Mammary epithelial cell (primary cell): ENCODE measurements at regions of chr17 and their contacts with region 1.

Region 1: GRCh38 chr17:8337802-8338752 is 1.6 kb upstream of the ODF4 start:
- DNase-seq: no peak
- H3K4me3 ChIP-seq: no peak overlapping the region
- H3K27ac ChIP-seq: no peak overlapping the region
- H3K4me1 ChIP-seq: no peaks in the 10 kb centered on the region
- H3K27me3 ChIP-seq: no peaks in the 10 kb centered on the region
- CTCF ChIP-seq: no peak

Region 2: GRCh38 chr17:8255499-8255898 is 82.6 kb before region 1 on chr17:
- CTCF ChIA-PET with region 1: no interaction called
- dilution Hi-C with region 1: loop called (anchors 5 kb)
- in situ Hi-C with region 1: no loop called
- intact Hi-C with region 1: no loop called
- DNase-seq: no peak
- H3K4me3 ChIP-seq: no peak overlapping the region
- H3K27ac ChIP-seq: no peak overlapping the region
- H3K4me1 ChIP-seq: no peaks in the 10 kb centered on the region
- H3K27me3 ChIP-seq: no peaks in the 10 kb centered on the region
- CTCF ChIP-seq: no peak